ENCODE measurements at regions of chr7 and their contacts with region 1.

Region 1: GRCh38 chr7:99797610-99798009 is 13.6 kb upstream of the CYP3A4 start:
- DNase-seq: no peak
- ATAC-seq: no peak
- H3K4me3 ChIP-seq: no peak overlapping the region
- H3K27ac ChIP-seq: no peak overlapping the region
- H3K4me1 ChIP-seq: no peaks in the 10 kb centered on the region
- H3K27me3 ChIP-seq: no peaks in the 10 kb centered on the region
- CTCF ChIP-seq: no peak
- POLR2A ChIP-seq: no peak
- RAD21 ChIP-seq: no peak

Region 2: DNA sequence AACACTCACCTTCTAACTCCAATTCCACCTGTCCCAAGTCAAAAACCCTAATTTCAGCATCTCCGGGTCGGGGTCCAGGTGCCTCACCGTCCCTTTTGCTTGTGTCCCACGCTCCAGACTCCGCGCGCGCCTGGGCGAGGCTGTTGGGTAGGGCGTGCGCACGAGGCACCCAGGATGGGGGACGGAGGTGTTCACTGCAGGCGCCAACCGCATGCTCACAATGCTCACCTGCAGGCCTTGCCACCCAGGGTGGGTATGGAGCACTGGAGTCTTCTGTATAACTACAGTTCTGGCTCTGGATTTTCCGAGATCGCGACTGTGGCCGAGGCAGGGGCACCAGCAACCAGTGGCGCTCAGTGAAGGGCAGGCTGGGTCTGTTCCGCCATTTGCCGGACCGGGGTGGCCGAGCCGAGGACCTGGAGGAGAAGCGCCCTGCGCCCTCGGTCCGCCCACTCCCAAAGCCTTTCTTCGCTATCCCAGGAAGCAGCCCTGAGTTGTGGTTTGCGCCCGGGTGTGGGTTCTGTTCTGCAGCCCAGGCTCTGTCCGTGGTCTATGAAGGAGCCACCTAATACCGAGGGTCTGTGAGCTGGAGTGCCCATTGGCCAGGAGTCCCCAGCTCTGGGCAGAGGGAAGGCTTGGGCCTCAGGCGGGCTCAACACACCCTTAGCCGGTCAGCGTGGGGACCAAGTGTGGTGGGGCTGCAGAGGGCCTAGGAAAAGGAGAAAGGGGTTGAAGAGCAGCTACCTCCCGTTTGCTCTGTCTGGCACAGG is 254.3 kb before region 1 on chr7:
- CTCF ChIA-PET with region 1: no interaction called
- POLR2A ChIA-PET with region 1: no interaction called
- dilution Hi-C with region 1: no loop called
- in situ Hi-C with region 1: no loop called
- intact Hi-C with region 1: no loop called
- DNase-seq: no peak
- ATAC-seq: no peak
- H3K4me3 ChIP-seq: no peak overlapping the region
- H3K27ac ChIP-seq: no peak overlapping the region
- H3K4me1 ChIP-seq: no peaks in the 10 kb centered on the region
- H3K27me3 ChIP-seq: no peaks in the 10 kb centered on the region
- CTCF ChIP-seq: no peak
- POLR2A ChIP-seq: no peak
- RAD21 ChIP-seq: no peak

Region 3: GRCh38 chr7:99824091-99824490 is 26.5 kb after region 1 on chr7:
- CTCF ChIA-PET with region 1: no interaction called
- POLR2A ChIA-PET with region 1: no interaction called
- dilution Hi-C with region 1: no loop called
- in situ Hi-C with region 1: no loop called
- intact Hi-C with region 1: loop called (anchors 1 kb)
- DNase-seq: no peak
- ATAC-seq: no peak
- H3K4me3 ChIP-seq: no peak overlapping the region
- H3K27ac ChIP-seq: no peak overlapping the region
- H3K4me1 ChIP-seq: no peaks in the 10 kb centered on the region
- H3K27me3 ChIP-seq: peaks cover 8% of the 10 kb centered on the region
- CTCF ChIP-seq: no peak
- POLR2A ChIP-seq: no peak
- RAD21 ChIP-seq: no peak